ENCODE measurements at regions of chr15 and their contacts with region 1.

Region 1: DNA sequence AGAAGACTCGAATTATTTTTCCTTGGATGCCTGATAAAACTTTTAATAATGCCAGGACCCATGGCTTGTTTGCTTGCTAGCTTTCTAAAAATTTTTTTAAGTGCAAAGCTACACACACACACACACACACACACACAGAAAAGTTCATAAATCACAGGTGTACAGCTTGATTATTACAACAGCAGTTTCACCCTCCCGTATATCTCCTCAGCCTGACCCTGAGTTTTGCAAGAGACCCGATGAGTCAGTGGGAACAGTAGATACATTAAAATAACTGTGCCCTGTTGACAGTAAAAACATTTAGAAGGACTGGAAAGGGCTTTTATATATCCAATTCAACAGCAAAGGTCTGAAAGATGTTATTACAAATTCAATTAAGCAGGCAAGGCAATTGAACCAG is 46.7 kb downstream of the EMC4 start:
- DNase-seq: no peak
- H3K4me3 Mint-ChIP-seq: no peak overlapping the region
- H3K27ac Mint-ChIP-seq: no peak overlapping the region
- H3K4me1 Mint-ChIP-seq: peaks cover 28% of the 10 kb centered on the region
- H3K27me3 Mint-ChIP-seq: no peaks in the 10 kb centered on the region

Region 2: GRCh38 chr15:34209421-34210282 is 61.8 kb before region 1 on chr15 and contains the start of gene KATNBL1:
- CTCF ChIA-PET with region 1: no interaction called
- intact Hi-C with region 1: no loop called
- DNase-seq: peak; percentile 98
- H3K4me3 Mint-ChIP-seq: peak within 1 kb of the TSS; percentile 87
- H3K27ac Mint-ChIP-seq: peak within 1 kb of the TSS; percentile 68
- H3K4me1 Mint-ChIP-seq: peaks cover 24% of the 10 kb centered on the region
- H3K27me3 Mint-ChIP-seq: no peaks in the 10 kb centered on the region
- total RNA-seq, gene KATNBL1: 46.4 to 51.6 TPM

Region 3: GRCh38 chr15:34233614-34234013 is 37.9 kb before region 1 on chr15:
- CTCF ChIA-PET with region 1: no interaction called
- intact Hi-C with region 1: no loop called
- DNase-seq: no peak
- H3K4me3 Mint-ChIP-seq: no peak overlapping the region
- H3K27ac Mint-ChIP-seq: peak overlapping the region; percentile 57
- H3K4me1 Mint-ChIP-seq: peaks cover 6% of the 10 kb centered on the region
- H3K27me3 Mint-ChIP-seq: no peaks in the 10 kb centered on the region

Region 4: GRCh38 chr15:34284937-34285336 is 13.4 kb after region 1 on chr15:
- CTCF ChIA-PET with region 1: interaction called, 7 read pairs
- intact Hi-C with region 1: loop called (anchors 2 kb)
- DNase-seq: no peak
- H3K4me3 Mint-ChIP-seq: no peak overlapping the region
- H3K27ac Mint-ChIP-seq: peak overlapping the region; percentile 57
- H3K4me1 Mint-ChIP-seq: peaks cover 21% of the 10 kb centered on the region
- H3K27me3 Mint-ChIP-seq: no peaks in the 10 kb centered on the region

Region 5: GRCh38 chr15:34318277-34319079 is 47.0 kb after region 1 on chr15:
- CTCF ChIA-PET with region 1: no interaction called
- intact Hi-C with region 1: loop called (anchors 5 kb)
- DNase-seq: peak; percentile 46
- H3K4me3 Mint-ChIP-seq: peak overlapping the region; percentile 96
- H3K27ac Mint-ChIP-seq: peak overlapping the region; percentile 92
- H3K4me1 Mint-ChIP-seq: peaks cover 61% of the 10 kb centered on the region
- H3K27me3 Mint-ChIP-seq: no peaks in the 10 kb centered on the region

Measured in activated naive CD4-positive, alpha-beta T cell treated with anti-CD3 and anti-CD28 coated beads for 36 hours (primary cell).